ENCODE measurements at regions of chr2 and their contacts with region 1.

Region 1: DNA sequence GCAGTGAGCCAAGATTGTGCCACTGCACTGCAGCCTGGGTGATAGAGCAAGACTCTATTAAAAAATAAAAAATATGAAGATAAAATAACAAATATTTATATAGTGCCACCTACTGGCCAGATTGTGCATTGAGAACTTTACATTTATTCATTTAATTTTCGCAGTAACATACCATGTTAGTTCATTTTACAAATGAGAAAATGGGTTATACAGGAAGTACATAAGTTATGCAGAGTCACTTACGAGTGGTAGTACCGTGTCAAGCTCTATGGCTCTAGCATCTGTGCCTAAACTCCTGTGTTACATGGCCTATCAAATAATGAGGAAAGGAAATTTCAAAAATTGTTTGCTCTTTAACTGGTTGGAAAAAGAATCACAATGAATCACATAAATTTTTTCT is 27.9 kb downstream of the RIF1 start:
- DNase-seq: peak; percentile 57
- H3K4me3 ChIP-seq: no peak overlapping the region
- H3K27ac ChIP-seq: no peak overlapping the region
- H3K4me1 ChIP-seq: peaks cover 3% of the 10 kb centered on the region
- H3K27me3 ChIP-seq: no peaks in the 10 kb centered on the region
- CTCF ChIP-seq: peak; percentile 66

Region 2: DNA sequence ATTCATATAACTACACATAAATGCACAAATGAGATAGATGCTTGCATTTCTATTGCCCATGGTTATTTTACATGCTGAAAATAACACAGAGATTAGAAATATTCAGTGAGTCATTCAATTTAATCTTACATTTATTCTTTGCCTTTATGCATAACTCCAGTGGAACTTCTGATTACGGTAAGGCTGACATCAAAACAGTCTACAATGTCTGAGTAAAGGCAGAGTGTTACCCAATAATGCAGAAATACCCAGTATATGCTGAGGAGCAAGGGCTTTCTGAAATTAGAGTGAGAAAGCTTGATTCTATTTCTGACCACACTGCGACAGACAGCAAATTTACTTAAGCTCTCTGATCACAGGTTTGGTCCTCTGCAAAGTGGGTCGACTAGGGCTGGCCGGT is 157.4 kb before region 1 on chr2:
- CTCF ChIA-PET with region 1: no interaction called
- POLR2A ChIA-PET with region 1: no interaction called
- intact Hi-C with region 1: loop called (anchors 5 kb)
- DNase-seq: no peak
- H3K4me3 ChIP-seq: no peak overlapping the region
- H3K27ac ChIP-seq: no peak overlapping the region
- H3K4me1 ChIP-seq: no peaks in the 10 kb centered on the region
- H3K27me3 ChIP-seq: no peaks in the 10 kb centered on the region
- CTCF ChIP-seq: no peak

Region 3: GRCh38 chr2:151465771-151466170 is 28.1 kb after region 1 on chr2:
- CTCF ChIA-PET with region 1: no interaction called
- POLR2A ChIA-PET with region 1: no interaction called
- intact Hi-C with region 1: loop called (anchors 5 kb)
- DNase-seq: no peak
- H3K4me3 ChIP-seq: no peak overlapping the region
- H3K27ac ChIP-seq: no peak overlapping the region
- H3K4me1 ChIP-seq: no peaks in the 10 kb centered on the region
- H3K27me3 ChIP-seq: no peaks in the 10 kb centered on the region
- CTCF ChIP-seq: no peak